ENCODE measurements at regions of chr9 and their contacts with region 1.

Region 1: GRCh38 chr9:98998441-98999151 is 54.9 kb downstream of the COL15A1 start:
- DNase-seq: peak; percentile 77 to 85 (median 83)
- ATAC-seq: peak; percentile 92 to 95 (median 95)
- H3K4me3 ChIP-seq: no peak overlapping the region
- H3K27ac ChIP-seq: no peak overlapping the region
- H3K4me1 ChIP-seq: peaks cover 0 to 10% (median 4%) of the 10 kb centered on the region in 4 donors
- H3K27me3 ChIP-seq: no peaks in the 10 kb centered on the region
- CTCF ChIP-seq: peak; percentile 75 to 91 (median 84)
- POLR2A ChIP-seq: no peak

Region 2: DNA sequence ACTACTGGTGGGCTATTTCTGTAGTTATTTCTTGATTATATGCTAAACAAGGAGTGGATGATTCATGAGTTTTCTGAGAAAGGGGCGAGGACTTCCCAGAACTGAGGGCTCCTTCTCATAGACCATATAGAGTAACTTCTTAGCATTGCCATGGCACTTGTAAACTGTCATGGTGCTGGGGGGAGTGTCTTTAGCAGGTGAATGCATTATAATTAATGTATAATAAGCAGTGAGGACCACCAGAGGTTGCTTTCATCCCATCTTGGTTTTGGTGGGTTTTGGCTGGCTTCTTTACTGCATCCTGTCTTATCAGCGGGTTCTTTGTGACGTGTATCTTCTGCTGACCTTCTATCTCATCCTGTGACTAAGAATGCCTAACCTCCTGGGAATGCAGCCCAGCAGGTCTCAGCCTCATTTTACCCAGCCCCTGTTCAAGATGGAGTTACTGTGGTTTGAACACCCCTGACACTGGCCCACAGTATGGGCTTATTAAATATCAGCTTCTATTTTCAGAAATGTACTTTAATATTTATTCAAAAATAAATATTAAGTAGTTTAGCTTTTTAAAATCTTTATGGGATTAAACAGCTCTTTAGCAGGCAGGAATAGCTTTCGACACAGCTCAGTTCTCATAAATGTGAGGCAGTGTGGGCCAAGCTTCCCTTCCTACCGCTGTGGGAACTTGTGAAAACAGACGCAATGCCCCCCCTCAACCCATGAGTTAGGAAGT is 146.7 kb before region 1 on chr9:
- intact Hi-C with region 1: loop called in 1 of 2 experiments (anchors 10 kb)
- DNase-seq: no peak
- ATAC-seq: no peak
- H3K4me3 ChIP-seq: no peak overlapping the region
- H3K27ac ChIP-seq: no peak overlapping the region
- H3K4me1 ChIP-seq: no peaks in the 10 kb centered on the region
- H3K27me3 ChIP-seq: no peaks in the 10 kb centered on the region
- CTCF ChIP-seq: no peak
- POLR2A ChIP-seq: no peak

Region 3: DNA sequence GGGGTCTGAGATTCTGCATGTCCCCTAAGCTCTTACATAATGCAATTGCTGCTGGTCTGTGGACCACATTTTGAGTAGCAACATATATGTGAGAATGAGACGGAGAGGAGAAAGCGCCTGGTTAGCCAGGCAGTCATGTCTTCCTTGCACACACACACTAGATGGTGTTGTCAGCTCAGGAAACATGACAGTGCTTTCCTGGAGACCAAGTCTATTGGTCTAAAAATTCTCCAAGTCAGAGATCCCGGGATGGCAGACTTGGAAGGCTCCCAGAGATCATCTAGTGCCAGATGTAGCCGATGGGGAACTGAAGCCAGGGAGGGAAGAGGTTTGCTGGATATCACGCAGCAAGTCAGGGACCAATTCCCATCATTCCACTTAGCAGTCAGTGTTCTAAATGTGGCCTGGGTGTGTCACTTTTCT is 137.7 kb before region 1 on chr9:
- intact Hi-C with region 1: loop called (anchors 10 kb)
- DNase-seq: no peak
- ATAC-seq: peak; percentile 48 to 70 (median 59)
- H3K4me3 ChIP-seq: no peak overlapping the region
- H3K27ac ChIP-seq: no peak overlapping the region
- H3K4me1 ChIP-seq: no peaks in the 10 kb centered on the region
- H3K27me3 ChIP-seq: no peaks in the 10 kb centered on the region
- CTCF ChIP-seq: peak in 3 of 4 donors; percentile 7 to 34 (median 25)
- POLR2A ChIP-seq: no peak

Region 4: DNA sequence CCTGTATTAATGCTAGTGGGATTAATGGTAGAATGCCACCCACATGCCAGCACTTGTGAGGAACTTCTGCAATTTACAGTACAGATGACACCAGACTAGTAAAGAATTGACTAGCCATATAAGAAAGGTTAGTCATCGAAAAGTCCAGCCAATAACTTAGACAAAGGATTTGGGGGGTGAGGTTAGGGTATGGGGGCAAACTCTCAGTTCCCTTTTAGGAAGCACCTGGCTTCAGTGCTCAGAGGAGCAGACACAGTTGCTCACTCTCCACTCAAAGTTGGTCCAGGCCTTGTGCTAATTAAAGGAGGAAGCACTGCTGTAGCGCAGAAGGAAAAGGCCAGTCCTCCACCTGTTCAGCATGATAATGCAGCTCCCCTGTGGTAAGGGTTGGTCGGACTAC is 131.5 kb after region 1 on chr9:
- intact Hi-C with region 1: no loop called
- DNase-seq: no peak
- ATAC-seq: no peak
- H3K4me3 ChIP-seq: no peak overlapping the region
- H3K27ac ChIP-seq: no peak overlapping the region
- H3K4me1 ChIP-seq: no peaks in the 10 kb centered on the region
- H3K27me3 ChIP-seq: no peaks in the 10 kb centered on the region
- CTCF ChIP-seq: no peak
- POLR2A ChIP-seq: no peak